ENCODE measurements at regions of chr9 and their contacts with region 1.

Region 1: GRCh38 chr9:99184475-99185347 is 37.0 kb downstream of the ALG2 start:
- DNase-seq: peak; percentile 87
- ATAC-seq: peak; percentile 77
- H3K4me3 Mint-ChIP-seq: no peak overlapping the region
- H3K27ac Mint-ChIP-seq: peak overlapping the region; percentile 82
- H3K4me1 Mint-ChIP-seq: peaks cover 64% of the 10 kb centered on the region
- H3K27me3 Mint-ChIP-seq: no peaks in the 10 kb centered on the region

Region 2: GRCh38 chr9:99162759-99163364 is 21.8 kb before region 1 on chr9:
- CTCF ChIA-PET with region 1: interaction called, 115 read pairs
- POLR2A ChIA-PET with region 1: interaction called, 7 read pairs
- DNase-seq: no peak
- ATAC-seq: no peak
- H3K4me3 Mint-ChIP-seq: no peak overlapping the region
- H3K27ac Mint-ChIP-seq: no peak overlapping the region
- H3K4me1 Mint-ChIP-seq: peaks cover 47% of the 10 kb centered on the region
- H3K27me3 Mint-ChIP-seq: peaks cover 10% of the 10 kb centered on the region

Region 3: DNA sequence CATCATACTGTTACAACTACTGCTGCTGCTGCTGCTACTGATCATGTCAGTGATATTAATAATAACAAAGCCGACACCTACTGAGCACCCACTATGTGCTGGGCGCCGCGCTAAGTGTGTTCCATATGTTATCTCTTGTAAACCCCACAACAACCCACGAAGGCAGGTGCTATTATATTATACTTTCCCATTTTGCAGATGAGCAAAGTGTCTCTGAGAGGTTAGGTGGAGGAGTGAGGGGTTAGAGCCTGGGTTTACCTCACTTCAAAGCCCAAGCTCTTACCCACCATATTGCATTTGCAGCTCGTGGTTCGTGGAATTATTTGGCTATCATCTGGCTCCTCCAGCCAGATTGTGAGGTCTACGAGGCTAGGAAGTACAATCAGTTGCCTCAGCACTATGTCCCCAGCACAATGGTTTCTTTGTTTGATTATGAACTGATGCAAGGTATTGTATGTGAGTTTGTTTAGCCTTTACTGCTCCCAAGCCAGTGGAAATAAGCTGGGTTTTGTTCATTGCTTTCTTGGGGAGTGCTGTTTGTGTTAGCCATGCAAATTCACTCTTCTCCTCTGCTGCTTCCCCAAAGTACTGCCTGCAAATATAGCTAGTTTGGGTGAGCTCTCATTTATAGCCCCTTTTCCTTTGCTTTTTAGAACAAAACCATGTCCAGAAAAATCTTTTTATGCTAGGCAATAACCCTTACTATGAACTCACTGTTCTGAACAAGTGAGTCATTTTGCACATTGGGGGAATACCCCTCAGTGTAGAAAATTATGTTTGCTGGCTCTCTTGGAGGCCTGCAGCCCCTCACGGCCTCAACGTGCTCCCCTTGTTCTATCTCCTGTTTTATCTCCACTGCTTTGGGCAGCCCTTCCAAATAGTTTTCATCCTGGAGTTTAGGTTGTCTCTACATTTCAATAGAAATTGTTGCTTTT is 10.9 kb before region 1 on chr9:
- CTCF ChIA-PET with region 1: interaction called, 115 read pairs
- POLR2A ChIA-PET with region 1: no interaction called
- DNase-seq: peak; percentile 16
- ATAC-seq: no peak
- H3K4me3 Mint-ChIP-seq: no peak overlapping the region
- H3K27ac Mint-ChIP-seq: no peak overlapping the region
- H3K4me1 Mint-ChIP-seq: peaks cover 8% of the 10 kb centered on the region
- H3K27me3 Mint-ChIP-seq: no peaks in the 10 kb centered on the region

Region 4: DNA sequence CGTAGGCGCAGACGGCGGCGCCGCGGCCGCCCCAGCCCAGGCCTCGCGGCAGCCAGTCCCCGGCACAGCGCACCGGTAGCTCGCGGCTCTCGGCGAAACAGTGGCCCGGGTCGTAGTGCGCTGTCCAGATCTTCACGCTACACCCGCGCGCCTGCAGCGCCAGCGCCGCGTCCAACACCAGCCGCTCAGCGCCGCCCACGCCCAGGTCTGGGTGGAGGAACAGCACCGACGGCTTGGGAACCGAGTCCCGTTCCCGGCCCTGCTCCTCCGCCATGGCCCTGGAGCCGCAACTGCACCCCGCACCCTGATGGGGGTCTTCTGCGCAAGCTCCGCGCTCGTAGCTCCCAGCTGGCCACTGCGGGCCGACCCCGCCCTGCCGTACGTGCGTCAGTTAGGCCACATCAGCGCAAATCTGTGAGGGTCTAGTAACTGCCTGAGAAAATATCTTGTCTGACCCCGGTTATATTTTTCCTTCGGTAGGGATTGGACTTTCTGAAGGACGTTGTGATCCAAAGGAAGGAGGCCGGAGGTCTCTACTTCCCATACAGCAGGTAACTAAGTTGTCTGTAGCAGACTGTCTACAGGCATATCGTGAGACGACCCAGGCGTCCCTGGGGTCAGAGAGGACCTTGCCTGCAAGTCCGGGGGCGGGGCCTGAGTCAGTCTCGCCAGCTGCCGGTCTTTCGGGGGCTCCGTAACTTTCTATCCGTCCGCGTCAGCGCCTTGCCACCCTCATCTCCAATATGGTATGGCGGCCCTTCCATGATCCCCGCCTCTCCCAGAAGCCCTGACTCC is 37.1 kb after region 1 on chr9 and contains the starts of genes ALG2 and SEC61B:
- CTCF ChIA-PET with region 1: interaction called, 25 read pairs
- POLR2A ChIA-PET with region 1: interaction called, 8 read pairs
- DNase-seq: peak; percentile 97
- ATAC-seq: peak; percentile 91
- H3K4me3 Mint-ChIP-seq: peak within 1 kb of the TSS; percentile 97
- H3K27ac Mint-ChIP-seq: peak within 1 kb of the TSS; percentile 99
- H3K4me1 Mint-ChIP-seq: peaks cover 57% of the 10 kb centered on the region
- H3K27me3 Mint-ChIP-seq: no peaks in the 10 kb centered on the region
- total RNA-seq, gene ALG2: 19.9 to 22.0 TPM
- total RNA-seq, gene SEC61B: 122 to 124 TPM

Region 5: GRCh38 chr9:99259231-99259918 is 74.7 kb after region 1 on chr9:
- CTCF ChIA-PET with region 1: interaction called, 11 read pairs
- POLR2A ChIA-PET with region 1: no interaction called
- DNase-seq: peak; percentile 72
- ATAC-seq: peak; percentile 90
- H3K4me3 Mint-ChIP-seq: peak overlapping the region; percentile 44
- H3K27ac Mint-ChIP-seq: peak overlapping the region; percentile 89
- H3K4me1 Mint-ChIP-seq: peaks cover 13% of the 10 kb centered on the region
- H3K27me3 Mint-ChIP-seq: no peaks in the 10 kb centered on the region

Region 6: DNA sequence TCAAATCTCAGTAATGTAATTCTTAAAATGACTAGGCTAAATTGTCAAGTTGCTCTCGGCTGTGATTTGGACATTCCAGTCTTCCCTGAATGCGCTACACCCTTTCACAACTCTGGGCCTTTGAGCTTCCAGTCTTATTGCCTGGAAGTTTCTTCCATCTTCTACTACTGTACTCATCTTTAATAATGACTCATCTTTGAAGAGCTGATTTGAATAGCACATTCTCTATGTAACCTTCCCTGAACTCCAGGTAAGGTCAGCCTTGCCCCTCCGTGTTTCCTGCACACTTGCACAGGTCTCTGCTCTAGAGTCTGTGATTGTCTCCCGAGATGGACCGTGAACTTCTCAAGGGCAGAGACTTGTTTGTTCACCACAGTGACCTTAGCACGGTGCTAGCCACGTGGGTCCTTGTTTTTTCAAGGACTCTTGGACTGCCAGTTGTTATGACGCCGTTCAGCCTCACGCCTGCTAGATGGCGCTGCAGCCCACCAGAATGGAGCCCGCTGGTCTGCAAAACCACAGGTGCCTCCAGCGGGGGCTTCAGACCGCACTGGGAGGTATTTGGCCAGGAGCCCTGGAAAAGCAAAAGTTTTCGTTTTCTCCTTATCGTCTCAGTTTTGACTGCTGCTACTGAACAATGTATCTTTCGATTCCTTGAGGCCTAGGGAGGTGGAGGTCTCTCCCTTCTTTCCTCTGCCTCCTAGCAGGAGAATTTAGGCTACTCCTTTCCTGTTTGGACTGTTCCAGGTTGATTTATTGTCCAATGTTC is 81.7 kb after region 1 on chr9:
- CTCF ChIA-PET with region 1: interaction called, 14 read pairs
- POLR2A ChIA-PET with region 1: no interaction called
- DNase-seq: peak; percentile 77
- ATAC-seq: peak; percentile 84
- H3K4me3 Mint-ChIP-seq: no peak overlapping the region
- H3K27ac Mint-ChIP-seq: no peak overlapping the region
- H3K4me1 Mint-ChIP-seq: peaks cover 11% of the 10 kb centered on the region
- H3K27me3 Mint-ChIP-seq: peaks cover 7% of the 10 kb centered on the region

Region 7: DNA sequence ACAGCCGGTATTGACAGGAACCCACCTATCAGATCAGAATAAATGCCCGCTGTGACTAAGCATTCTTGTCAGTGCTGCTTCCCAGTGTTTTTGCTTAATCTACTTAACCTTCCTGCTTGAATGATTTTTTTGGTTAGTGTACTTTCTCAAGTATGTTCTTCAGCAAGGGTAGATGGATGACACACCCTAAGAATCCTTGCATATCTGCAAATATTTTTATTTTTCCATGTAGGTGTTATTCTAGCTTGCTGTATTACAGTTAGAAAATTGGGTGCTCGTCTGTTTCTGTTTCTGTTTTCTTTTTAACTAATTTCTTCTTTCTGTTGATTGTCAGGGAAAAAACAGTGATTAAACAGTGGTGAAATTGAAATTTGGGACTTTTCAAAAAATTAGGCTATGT is 101.8 kb after region 1 on chr9:
- CTCF ChIA-PET with region 1: no interaction called
- POLR2A ChIA-PET with region 1: no interaction called
- DNase-seq: no peak
- ATAC-seq: no peak
- H3K4me3 Mint-ChIP-seq: no peak overlapping the region
- H3K27ac Mint-ChIP-seq: no peak overlapping the region
- H3K4me1 Mint-ChIP-seq: peaks cover 2% of the 10 kb centered on the region
- H3K27me3 Mint-ChIP-seq: peaks cover 14% of the 10 kb centered on the region

Region 8: DNA sequence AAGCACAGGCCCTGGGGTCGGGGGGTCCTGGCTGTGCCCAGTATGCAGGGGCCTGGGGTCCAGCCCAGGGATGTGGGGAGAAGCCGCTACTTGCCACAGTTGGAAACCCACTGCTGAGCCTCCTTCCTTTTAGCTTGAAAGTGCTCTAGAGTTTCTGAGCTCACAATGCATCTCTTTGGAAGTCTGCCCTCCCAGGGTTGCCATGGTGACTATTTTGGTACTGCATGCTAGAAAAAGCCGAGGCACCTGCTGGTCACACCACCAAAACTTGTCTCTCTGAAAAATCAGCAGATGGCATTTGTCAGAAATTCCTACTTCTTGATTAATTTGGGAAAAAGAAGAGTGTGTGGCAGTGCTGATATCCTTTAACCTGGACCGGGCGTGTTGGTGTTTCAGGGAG is 189.2 kb after region 1 on chr9:
- CTCF ChIA-PET with region 1: no interaction called
- POLR2A ChIA-PET with region 1: no interaction called
- DNase-seq: no peak
- ATAC-seq: no peak
- H3K4me3 Mint-ChIP-seq: no peak overlapping the region
- H3K27ac Mint-ChIP-seq: no peak overlapping the region
- H3K4me1 Mint-ChIP-seq: peaks cover 3% of the 10 kb centered on the region
- H3K27me3 Mint-ChIP-seq: peaks cover 27% of the 10 kb centered on the region

Region 9: GRCh38 chr9:100204796-100205195 is 1020.1 kb after region 1 on chr9:
- CTCF ChIA-PET with region 1: no interaction called
- POLR2A ChIA-PET with region 1: no interaction called
- DNase-seq: no peak
- ATAC-seq: no peak
- H3K4me3 Mint-ChIP-seq: no peak overlapping the region
- H3K27ac Mint-ChIP-seq: no peak overlapping the region
- H3K4me1 Mint-ChIP-seq: peaks cover 1% of the 10 kb centered on the region
- H3K27me3 Mint-ChIP-seq: no peaks in the 10 kb centered on the region

Measured in activated CD8-positive, alpha-beta T cell treated with anti-CD3 and anti-CD28 coated beads, Interleukin-2, amount 10 ng/mL, durations not matched to agents 7 days and 5 days (primary cell).